AG04450 (cell line): ENCODE measurements at regions of chr7 and their contacts with region 1.

Region 1: GRCh38 chr7:40232242-40232893 is 97.6 kb downstream of the SUGCT start:
- DNase-seq: peak; percentile 29
- H3K4me3 ChIP-seq: no peak overlapping the region
- H3K27ac ChIP-seq: no peak overlapping the region
- H3K27me3 ChIP-seq: no peaks in the 10 kb centered on the region
- CTCF ChIP-seq: peak; percentile 66

Region 2: GRCh38 chr7:40167291-40167690 is 65.1 kb before region 1 on chr7:
- CTCF ChIA-PET with region 1: no interaction called
- POLR2A ChIA-PET with region 1: no interaction called
- DNase-seq: no peak
- H3K4me3 ChIP-seq: no peak overlapping the region
- H3K27ac ChIP-seq: no peak overlapping the region
- H3K27me3 ChIP-seq: no peaks in the 10 kb centered on the region
- CTCF ChIP-seq: no peak

Region 3: GRCh38 chr7:40221836-40222235 is 10.5 kb before region 1 on chr7:
- CTCF ChIA-PET with region 1: interaction called, 18 read pairs
- POLR2A ChIA-PET with region 1: interaction called, 4 read pairs
- DNase-seq: peak; percentile 70
- H3K4me3 ChIP-seq: no peak overlapping the region
- H3K27ac ChIP-seq: peak overlapping the region; percentile 83
- H3K27me3 ChIP-seq: no peaks in the 10 kb centered on the region
- CTCF ChIP-seq: no peak

Region 4: DNA sequence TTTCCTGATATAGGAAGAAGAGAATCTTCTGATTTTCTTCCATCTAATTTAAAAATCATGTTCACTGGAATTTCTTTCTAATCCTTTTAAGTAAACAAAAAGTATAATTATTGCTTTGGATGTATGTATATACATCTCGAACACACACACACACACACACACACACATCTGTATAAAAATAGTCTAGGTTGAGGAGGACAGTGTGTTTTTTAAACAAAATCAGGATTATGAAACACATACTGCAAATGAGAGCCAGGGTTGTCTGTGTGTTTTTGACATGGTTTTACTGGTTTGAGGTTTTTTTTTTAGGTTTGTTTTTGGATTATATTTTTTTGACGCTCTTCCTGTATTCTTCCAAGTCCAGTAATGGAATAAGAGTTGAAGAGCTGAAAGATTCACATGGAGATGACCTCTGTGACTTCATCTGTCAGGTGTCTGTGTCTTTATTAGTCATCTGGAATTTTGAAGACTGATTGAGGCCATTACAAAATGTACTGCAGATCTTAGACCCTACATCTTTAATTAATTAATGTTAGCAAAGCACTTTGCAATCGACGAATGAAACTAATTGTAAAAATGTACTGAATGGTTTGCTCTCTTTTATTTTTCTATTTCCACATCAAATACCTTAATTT is 139.6 kb after region 1 on chr7:
- CTCF ChIA-PET with region 1: no interaction called
- POLR2A ChIA-PET with region 1: no interaction called
- DNase-seq: no peak
- H3K4me3 ChIP-seq: no peak overlapping the region
- H3K27ac ChIP-seq: no peak overlapping the region
- H3K27me3 ChIP-seq: no peaks in the 10 kb centered on the region
- CTCF ChIP-seq: no peak

Region 5: GRCh38 chr7:40604601-40605438 is 372.5 kb after region 1 on chr7:
- CTCF ChIA-PET with region 1: interaction called, 67 read pairs
- POLR2A ChIA-PET with region 1: no interaction called
- DNase-seq: peak; percentile 21
- H3K4me3 ChIP-seq: no peak overlapping the region
- H3K27ac ChIP-seq: no peak overlapping the region
- H3K27me3 ChIP-seq: no peaks in the 10 kb centered on the region
- CTCF ChIP-seq: peak; percentile 84

Region 6: DNA sequence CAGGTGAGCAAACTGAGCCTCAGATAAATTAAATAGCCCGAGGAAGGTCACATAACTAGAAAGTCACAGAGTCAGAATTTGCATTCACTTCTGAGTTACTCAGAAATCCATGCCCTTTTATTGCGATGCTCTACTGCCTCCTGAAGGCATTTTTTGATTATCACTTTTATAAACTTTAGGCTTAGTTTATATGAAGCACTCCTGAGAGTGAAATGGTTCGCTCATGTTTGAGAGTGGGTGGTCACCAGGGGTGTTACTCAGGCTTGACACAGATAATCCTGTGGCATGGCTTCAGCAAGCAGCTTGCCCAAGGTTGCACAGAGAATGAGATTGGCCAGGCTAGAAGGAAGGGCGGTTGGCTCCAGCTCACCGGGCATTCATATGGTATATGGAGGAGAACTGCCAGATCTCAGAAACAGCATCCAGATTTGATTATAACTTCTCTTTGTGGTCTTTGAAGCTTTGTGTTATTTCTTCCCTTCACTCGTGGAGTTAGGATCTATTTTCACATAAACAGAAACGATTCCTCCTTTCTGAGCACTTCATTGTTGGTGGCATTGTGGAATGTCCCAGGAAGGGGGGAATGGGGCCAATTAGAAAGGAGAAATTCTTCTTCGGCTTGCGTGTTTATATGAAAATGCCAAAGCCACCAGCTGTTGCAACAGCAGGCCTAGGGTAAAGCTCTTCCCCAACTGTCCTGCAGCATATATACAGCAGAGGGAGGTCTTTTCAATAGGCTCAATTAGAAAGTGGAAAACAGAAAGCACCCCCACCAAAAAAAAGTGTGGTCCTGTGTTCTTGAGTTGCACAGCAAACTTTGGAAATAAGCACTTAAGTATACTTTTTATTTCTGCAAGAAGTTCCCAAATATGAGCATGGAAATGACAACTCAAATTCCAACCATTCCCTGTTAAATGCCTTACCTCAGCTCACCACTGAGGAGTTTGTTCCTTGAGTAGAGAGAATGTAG is 531.2 kb after region 1 on chr7:
- CTCF ChIA-PET with region 1: interaction called, 59 read pairs
- POLR2A ChIA-PET with region 1: interaction called, 3 read pairs
- DNase-seq: peak; percentile 54
- H3K4me3 ChIP-seq: peak overlapping the region; percentile 35
- H3K27ac ChIP-seq: peak overlapping the region; percentile 25
- H3K27me3 ChIP-seq: no peaks in the 10 kb centered on the region
- CTCF ChIP-seq: peak; percentile 76

Region 7: GRCh38 chr7:41696314-41696916 is 1464.0 kb after region 1 on chr7:
- CTCF ChIA-PET with region 1: interaction called, 16 read pairs
- POLR2A ChIA-PET with region 1: no interaction called
- DNase-seq: peak; percentile 76
- H3K4me3 ChIP-seq: peak overlapping the region; percentile 81
- H3K27ac ChIP-seq: peak overlapping the region; percentile 84
- H3K27me3 ChIP-seq: no peaks in the 10 kb centered on the region
- CTCF ChIP-seq: peak; percentile 83

Region 8: GRCh38 chr7:41730161-41730560 is 1497.8 kb after region 1 on chr7:
- CTCF ChIA-PET with region 1: interaction called, 10 read pairs
- POLR2A ChIA-PET with region 1: no interaction called
- DNase-seq: no peak
- H3K4me3 ChIP-seq: no peak overlapping the region
- H3K27ac ChIP-seq: no peak overlapping the region
- H3K27me3 ChIP-seq: no peaks in the 10 kb centered on the region
- CTCF ChIP-seq: no peak